Posterior vena cava (tissue), 2 donors: ENCODE measurements at regions of chr2 and their contacts with region 1.

Region 1: GRCh38 chr2:39069136-39069515 is 51.7 kb downstream of the SOS1 start:
- DNase-seq: no peak

Region 2: DNA sequence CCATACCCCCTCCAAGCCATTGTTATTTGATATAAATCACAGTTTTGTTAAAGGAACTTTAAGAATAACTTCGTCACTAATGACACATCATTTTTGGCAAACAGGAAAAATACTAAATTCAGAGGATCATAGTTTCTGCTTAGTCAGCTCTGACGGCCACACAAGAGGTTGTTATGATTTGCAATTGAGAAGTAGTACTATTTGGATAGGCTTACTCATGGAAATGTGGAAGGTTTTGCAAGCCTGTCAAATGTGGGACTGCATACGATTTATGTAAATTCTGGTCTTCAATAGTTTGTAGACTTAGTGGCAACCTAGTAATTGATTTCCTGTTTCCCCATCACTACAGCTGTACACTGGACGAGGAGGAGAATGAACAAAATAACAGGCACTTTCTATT is 71.3 kb before region 1 on chr2:
- intact Hi-C with region 1: no loop called
- DNase-seq: no peak

Region 3: GRCh38 chr2:39119732-39120520 is 50.8 kb after region 1 on chr2:
- intact Hi-C with region 1: loop called in 1 of 2 experiments (anchors 10 kb)
- DNase-seq: peak; percentile 84

Region 4: GRCh38 chr2:39227628-39228412 is 158.7 kb after region 1 on chr2:
- intact Hi-C with region 1: loop called (anchors 2 to 5 kb)
- DNase-seq: peak; percentile 93